ENCODE measurements at regions of chr14 and their contacts with region 1.

Region 1: DNA sequence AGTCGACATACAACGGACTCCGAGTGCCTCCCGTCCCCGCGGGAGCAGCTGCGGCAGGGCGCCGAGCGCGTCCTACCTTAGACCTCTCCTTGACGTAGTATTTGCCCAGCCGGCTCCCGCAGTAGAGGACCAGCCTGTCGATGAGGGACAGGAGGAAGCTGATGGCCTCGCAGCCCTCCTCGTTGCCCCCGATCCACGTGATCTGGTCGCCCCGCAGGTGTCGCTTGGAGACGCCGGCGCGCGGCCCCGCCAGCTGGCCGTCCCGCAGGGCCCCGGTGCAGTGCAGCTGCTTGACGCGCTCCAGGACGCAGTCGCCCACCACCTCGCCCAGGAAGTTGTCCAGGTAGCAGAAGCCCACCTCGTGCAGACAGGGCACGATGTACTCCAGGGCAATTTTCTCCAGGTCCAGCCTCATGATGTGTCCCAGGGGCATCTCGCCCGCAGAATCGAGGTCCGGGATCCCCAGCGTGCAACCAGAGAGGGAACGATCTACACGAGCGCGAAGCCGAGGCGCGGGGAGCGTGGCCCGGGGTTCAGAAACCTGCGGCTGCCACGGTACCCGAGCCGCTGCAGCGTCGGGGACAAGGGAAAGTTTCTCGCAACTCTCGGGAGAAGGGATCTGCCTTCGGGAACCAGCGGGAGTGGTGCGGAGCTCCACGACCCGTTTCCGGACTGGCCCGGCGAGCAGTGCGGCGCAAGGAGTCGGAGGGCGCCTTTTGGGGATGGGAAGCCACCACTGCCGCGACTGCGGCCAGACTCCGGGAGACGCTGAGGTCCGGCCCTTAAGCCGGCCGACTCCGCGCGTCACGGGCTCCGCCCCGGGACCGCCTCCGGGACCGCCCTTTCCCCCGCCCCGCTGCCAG is at the start of gene EGLN3:
- DNase-seq: peak; percentile 90 to 93
- ATAC-seq: peak; percentile 98 to 99 (median 99)
- H3K4me3 ChIP-seq: peak within 1 kb of the TSS; percentile 73 to 93 (median 80)
- H3K27ac ChIP-seq: peak within 1 kb of the TSS; percentile 63 to 92 (median 83)
- H3K4me1 ChIP-seq: peaks cover 0 to 51% (median 28%) of the 10 kb centered on the region in 9 donors
- H3K27me3 ChIP-seq: peaks cover 0 to 53% (median 0%) of the 10 kb centered on the region in 7 donors
- CTCF ChIP-seq: no peak
- total RNA-seq, gene EGLN3: 50.8 to 281 (median 169) TPM

Region 2: DNA sequence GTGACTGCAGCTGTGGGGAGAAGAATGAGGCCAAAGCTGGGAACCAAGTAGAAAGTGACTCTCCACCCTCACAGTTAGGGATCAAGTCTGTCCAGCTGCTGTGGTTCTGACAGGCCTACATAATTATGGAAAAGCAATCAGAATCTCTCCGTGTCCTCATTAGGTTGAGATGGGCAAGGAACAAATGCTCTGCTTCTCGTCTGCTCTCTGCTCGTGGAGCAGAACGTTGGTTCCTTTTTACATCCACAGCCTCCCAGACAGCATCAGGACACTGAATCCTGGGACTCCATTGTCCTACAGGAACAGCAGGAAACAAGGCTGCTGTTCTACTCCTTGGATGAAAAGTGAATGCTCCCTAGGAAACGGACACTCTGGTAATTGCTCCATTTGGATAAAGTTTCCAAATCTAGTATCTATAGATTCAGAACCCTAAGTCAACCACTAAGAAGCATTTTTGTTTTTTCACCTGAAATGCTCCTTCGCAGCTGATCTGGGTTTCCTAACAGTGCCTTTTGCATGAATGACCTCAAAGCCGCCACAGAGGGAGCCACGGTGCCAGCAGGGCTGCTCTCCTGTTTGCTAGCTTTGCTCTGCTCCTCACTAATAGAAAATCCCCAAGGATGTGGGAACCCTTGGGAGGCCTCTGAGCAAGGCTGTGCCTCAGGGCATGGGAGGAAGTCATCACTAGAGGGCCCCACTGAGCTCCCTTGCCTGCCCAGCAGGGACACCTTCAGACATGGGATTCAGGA is 101.7 kb before region 1 on chr14:
- intact Hi-C with region 1: loop called in 4 of 10 experiments (anchors 5 to 10 kb)
- DNase-seq: peak; percentile 51 to 71
- ATAC-seq: peak; percentile 78 to 95 (median 92)
- H3K4me3 ChIP-seq: no peak overlapping the region
- H3K27ac ChIP-seq: no peak overlapping the region
- H3K4me1 ChIP-seq: peaks cover 0 to 11% (median 3%) of the 10 kb centered on the region in 9 donors
- H3K27me3 ChIP-seq: no peaks in the 10 kb centered on the region
- CTCF ChIP-seq: peak; percentile 56 to 81 (median 75)

Region 3: GRCh38 chr14:34030864-34031263 is 80.3 kb after region 1 on chr14:
- intact Hi-C with region 1: loop called in 3 of 10 experiments (anchors 5 to 10 kb)
- DNase-seq: peak; percentile 25 to 73
- ATAC-seq: peak; percentile 50 to 81 (median 66)
- H3K4me3 ChIP-seq: no peak overlapping the region
- H3K27ac ChIP-seq: peak overlapping the region in 7 of 10 donors; percentile 33 to 69 (median 57)
- H3K4me1 ChIP-seq: peaks cover 4 to 39% (median 22%) of the 10 kb centered on the region in 9 donors
- H3K27me3 ChIP-seq: no peaks in the 10 kb centered on the region
- CTCF ChIP-seq: no peak

Region 4: GRCh38 chr14:34081576-34082136 is 131.1 kb after region 1 on chr14:
- intact Hi-C with region 1: loop called in 2 of 10 experiments (anchors 5 to 10 kb)
- DNase-seq: no peak
- ATAC-seq: peak; percentile 53 to 89 (median 78)
- H3K4me3 ChIP-seq: no peak overlapping the region
- H3K27ac ChIP-seq: peak overlapping the region; percentile 79 to 97 (median 94)
- H3K4me1 ChIP-seq: peaks cover 0 to 48% (median 19%) of the 10 kb centered on the region in 9 donors
- H3K27me3 ChIP-seq: no peaks in the 10 kb centered on the region
- CTCF ChIP-seq: no peak

Region 5: DNA sequence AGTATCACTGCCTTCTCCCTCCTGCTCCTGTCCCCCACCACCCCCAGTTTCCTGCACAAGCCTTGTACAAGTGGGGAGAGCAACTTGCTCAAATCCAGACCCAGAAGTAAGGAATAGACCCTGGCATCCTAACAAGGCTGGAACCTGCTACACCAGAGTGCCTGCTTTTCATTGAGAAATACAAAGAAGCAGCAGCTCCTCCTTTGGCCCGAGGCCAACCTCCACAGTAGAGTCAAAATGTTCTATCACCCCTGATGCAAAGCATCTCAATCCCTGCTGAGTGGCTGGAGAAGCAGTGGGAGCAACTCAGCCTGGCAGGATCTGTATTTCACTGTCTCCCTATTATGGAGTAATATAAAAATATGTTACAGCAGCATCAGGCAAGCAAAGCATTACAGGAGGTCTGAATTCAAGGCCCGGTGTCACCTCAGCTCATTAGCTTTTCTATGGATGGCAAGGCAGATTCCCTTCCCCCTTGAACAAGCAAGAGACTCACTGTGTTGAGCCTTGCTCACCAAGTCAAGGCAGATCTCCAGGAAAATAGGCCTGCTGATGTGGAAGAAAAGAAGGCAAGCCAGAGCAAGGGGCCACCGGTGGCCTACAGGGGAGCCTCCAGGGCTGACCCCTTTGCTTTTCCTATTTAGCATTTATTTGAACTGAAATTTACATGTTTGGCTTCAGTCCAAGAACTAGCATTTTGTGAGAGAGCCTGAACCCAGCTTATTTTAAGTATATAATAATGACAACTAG is 186.6 kb after region 1 on chr14:
- intact Hi-C with region 1: no loop called
- DNase-seq: no peak
- ATAC-seq: no peak
- H3K4me3 ChIP-seq: no peak overlapping the region
- H3K27ac ChIP-seq: no peak overlapping the region
- H3K4me1 ChIP-seq: peaks cover 0 to 13% (median 5%) of the 10 kb centered on the region in 9 donors
- H3K27me3 ChIP-seq: no peaks in the 10 kb centered on the region
- CTCF ChIP-seq: no peak

Region 6: DNA sequence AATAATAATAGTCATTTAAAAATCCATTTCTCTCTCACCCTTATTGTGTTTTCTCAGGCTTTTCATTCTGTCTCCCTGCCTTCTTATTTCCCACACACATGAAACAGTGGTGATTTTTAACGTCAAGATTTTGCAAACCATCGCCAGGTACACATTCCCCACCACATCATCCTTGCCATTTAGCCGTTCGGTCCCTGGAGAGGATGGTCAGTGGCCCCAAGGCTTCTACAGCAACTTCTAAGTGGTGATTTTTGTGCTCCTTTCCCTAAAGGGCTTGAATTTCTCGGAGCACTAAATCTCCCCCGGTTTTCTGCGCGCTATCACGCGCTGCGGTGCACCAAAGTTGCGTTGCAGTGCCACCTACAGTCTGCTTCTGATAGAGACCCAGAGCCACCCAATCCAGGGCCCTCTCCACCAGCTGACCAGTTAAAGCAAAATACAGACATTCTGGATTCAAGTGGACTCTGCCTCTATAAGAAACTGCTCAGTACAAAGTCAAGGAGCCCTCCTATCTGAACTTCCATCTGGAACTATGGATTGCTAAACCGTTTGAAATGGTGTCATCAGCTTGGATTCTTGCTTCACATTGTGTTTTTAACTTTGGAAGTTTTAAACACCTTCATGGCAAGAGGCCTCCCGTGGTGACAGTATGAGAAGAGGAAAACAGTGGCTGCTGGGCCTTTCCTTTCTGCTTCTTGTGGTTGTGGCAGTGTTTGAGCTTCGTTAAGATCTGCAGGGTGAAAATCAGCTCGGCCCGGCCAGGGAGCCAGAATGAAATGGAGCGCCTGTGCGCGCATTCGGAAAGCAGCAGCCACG is 277.5 kb after region 1 on chr14:
- intact Hi-C with region 1: loop called in 2 of 10 experiments (anchors 5 to 10 kb)
- DNase-seq: peak; percentile 53 to 73
- ATAC-seq: peak; percentile 91 to 96 (median 94)
- H3K4me3 ChIP-seq: peak overlapping the region in 6 of 10 donors; percentile 12 to 42 (median 34)
- H3K27ac ChIP-seq: no peak overlapping the region
- H3K4me1 ChIP-seq: peaks cover 0 to 30% (median 6%) of the 10 kb centered on the region in 9 donors
- H3K27me3 ChIP-seq: no peaks in the 10 kb centered on the region
- CTCF ChIP-seq: peak; percentile 62 to 95 (median 85)